H1 (cell line): ENCODE measurements at regions of chr1 and their contacts with region 1.

Region 1: DNA sequence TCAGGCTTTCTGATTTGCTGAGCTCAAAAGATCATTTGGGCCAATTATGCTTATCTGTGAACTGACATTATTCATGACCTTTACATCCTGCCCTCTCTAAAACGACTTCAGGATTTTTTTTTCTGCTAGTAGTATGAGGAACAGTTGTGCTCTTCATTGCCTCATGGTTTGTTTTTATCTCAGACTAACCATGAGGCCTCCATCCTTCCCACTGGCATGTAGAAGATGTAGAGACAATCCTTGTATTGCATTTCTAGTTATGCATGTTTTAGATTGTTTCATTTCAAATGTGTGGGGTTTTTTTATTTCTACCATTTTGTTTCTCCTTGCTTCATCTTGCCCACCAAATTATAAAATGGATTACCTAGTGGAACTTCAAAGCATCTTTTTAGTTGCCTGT is 82.8 kb upstream of the C1orf87 start:
- DNase-seq: no peak
- H3K4me3 ChIP-seq: no peak overlapping the region
- H3K27ac ChIP-seq: no peak overlapping the region
- H3K4me1 ChIP-seq: no peaks in the 10 kb centered on the region
- H3K27me3 ChIP-seq: no peaks in the 10 kb centered on the region
- CTCF ChIP-seq: no peak
- EP300 ChIP-seq: no peak
- POLR2A ChIP-seq: no peak
- RAD21 ChIP-seq: no peak

Region 2: DNA sequence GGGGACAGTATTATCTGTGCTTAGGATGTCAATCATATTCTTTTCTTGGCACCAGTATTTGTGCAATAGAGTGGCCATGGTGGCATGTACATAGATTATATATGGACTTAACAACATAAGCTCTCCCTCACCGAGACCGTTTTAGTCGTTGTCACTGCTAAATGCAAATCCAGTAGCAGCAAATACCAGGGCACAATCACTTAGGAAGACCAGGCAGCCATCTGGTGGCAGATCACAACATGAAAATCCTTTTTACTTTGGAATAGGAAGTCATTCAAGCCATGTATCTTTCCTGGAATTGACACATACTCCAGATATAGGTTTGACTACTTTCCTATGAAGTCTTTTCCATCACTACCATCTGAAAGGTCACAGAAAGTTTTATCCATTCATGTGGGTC is 29.6 kb before region 1 on chr1:
- CTCF ChIA-PET with region 1: interaction called, 11 read pairs
- POLR2A ChIA-PET with region 1: no interaction called
- DNase-seq: no peak
- H3K4me3 ChIP-seq: no peak overlapping the region
- H3K27ac ChIP-seq: no peak overlapping the region
- H3K4me1 ChIP-seq: no peaks in the 10 kb centered on the region
- H3K27me3 ChIP-seq: peaks cover 0 to 1% (median 0%) of the 10 kb centered on the region in 4 experiments; a peak in 1 of 7 replicates
- CTCF ChIP-seq: peak in 2 of 3 experiments; percentile 48 to 57; a peak in 3 of 4 replicates
- EP300 ChIP-seq: no peak
- POLR2A ChIP-seq: no peak
- RAD21 ChIP-seq: peak; percentile 62 to 72

Region 3: GRCh38 chr1:60171801-60172200 is 15.4 kb after region 1 on chr1:
- CTCF ChIA-PET with region 1: interaction called, 15 read pairs
- POLR2A ChIA-PET with region 1: no interaction called
- DNase-seq: no peak
- H3K4me3 ChIP-seq: no peak overlapping the region
- H3K27ac ChIP-seq: no peak overlapping the region
- H3K4me1 ChIP-seq: no peaks in the 10 kb centered on the region
- H3K27me3 ChIP-seq: no peaks in the 10 kb centered on the region
- CTCF ChIP-seq: no peak
- EP300 ChIP-seq: no peak
- POLR2A ChIP-seq: no peak
- RAD21 ChIP-seq: no peak

Region 4: GRCh38 chr1:60245324-60245723 is 89.0 kb after region 1 on chr1:
- CTCF ChIA-PET with region 1: no interaction called
- POLR2A ChIA-PET with region 1: no interaction called
- DNase-seq: no peak
- H3K4me3 ChIP-seq: no peak overlapping the region
- H3K27ac ChIP-seq: no peak overlapping the region
- H3K4me1 ChIP-seq: no peaks in the 10 kb centered on the region
- H3K27me3 ChIP-seq: no peaks in the 10 kb centered on the region
- CTCF ChIP-seq: no peak
- EP300 ChIP-seq: no peak
- POLR2A ChIP-seq: no peak
- RAD21 ChIP-seq: no peak

Region 5: DNA sequence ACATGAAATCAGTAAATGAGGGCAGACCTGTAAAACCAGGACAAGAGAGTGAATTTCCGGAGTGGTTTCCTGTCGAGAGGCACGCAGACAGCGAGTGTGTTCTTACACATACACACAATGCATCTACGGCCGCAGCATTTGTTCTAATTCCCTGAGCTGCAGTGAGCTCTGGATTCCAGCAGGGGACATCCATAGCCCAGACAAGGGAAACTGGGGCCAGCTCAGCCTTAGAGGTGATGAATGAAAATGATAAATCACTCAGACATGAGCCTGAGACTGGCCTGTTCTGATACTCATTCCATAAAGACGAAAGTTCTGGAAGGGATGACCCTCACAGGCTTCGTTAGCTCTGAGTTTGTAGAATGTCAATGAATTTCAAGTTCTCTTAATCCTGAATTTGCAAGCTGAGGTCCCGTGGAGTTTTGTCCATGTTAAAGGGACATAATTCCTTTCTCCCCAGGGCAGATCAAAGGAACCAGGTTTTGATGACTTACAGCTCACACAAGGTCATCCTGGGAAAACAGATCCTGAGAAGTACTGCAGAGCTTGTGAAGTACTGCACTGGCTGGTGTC is 125.1 kb after region 1 on chr1:
- CTCF ChIA-PET with region 1: interaction called, 16 read pairs
- POLR2A ChIA-PET with region 1: no interaction called
- DNase-seq: peak; percentile 59 to 61
- H3K4me3 ChIP-seq: no peak overlapping the region
- H3K27ac ChIP-seq: no peak overlapping the region
- H3K4me1 ChIP-seq: peaks cover 0 to 5% (median 0%) of the 10 kb centered on the region in 4 experiments; a peak in 2 of 7 replicates
- H3K27me3 ChIP-seq: no peaks in the 10 kb centered on the region
- CTCF ChIP-seq: peak; percentile 78 to 95 (median 82)
- EP300 ChIP-seq: no peak
- POLR2A ChIP-seq: no peak
- RAD21 ChIP-seq: peak; percentile 97 to 98